Panc1 (cell line): ENCODE measurements at regions of chr16 and their contacts with region 1.

Region 1: DNA sequence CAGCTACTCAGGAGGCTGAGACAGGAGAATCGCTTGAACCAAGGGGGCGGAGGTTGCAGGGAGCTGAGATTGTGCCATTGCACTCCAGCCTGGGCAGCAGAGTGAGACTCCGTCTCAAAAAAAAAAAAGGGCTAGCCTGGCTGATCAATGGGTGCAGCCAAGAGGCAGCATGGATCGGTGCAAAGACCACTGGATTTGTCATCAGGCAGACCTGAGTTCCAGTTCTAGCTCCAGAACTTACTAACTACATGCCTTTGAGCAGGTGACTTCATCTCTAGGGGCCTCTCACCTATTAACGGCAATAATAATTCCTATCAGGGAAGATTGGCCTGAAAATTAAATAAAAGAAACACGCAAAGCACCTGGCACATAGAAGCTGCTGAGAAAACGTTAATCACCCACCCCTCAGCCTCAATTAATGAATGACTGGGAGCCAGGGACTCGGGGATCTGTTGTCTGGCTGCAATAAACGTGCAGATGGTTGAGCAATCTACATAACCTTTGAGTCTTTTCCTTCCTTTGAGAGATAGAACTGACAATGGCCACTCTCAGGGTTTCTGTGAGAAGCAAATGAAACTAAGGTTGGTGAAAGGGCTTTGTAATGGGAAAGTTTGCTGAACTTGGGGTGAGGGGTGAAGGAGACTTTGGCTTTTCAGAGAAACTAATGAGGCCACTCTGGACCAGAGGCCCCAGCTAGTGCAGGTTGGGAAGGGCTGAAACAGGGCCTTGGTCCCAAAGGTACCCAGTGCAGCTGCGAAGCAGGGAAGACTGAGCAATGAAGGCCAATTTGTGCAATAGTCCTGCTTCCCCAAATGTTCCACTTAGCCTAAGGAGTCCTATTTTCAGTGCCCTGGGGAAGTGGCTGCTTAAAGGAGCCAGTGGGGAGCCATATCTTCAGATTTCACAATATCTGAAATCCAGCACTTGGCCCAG is 7.6 kb downstream of the SEZ6L2 start:
- DNase-seq: no peak
- ATAC-seq: no peak
- H3K4me3 ChIP-seq: no peak overlapping the region
- H3K27ac ChIP-seq: no peak overlapping the region
- H3K4me1 ChIP-seq: no peaks in the 10 kb centered on the region
- H3K27me3 ChIP-seq: no peaks in the 10 kb centered on the region
- CTCF ChIP-seq: no peak

Region 2: GRCh38 chr16:29694384-29695195 is 197.2 kb before region 1 on chr16:
- CTCF ChIA-PET with region 1: interaction called, 11 read pairs
- POLR2A ChIA-PET with region 1: no interaction called
- in situ Hi-C with region 1: no loop called
- intact Hi-C with region 1: no loop called
- DNase-seq: no peak
- ATAC-seq: no peak
- H3K4me3 ChIP-seq: no peak overlapping the region
- H3K27ac ChIP-seq: no peak overlapping the region
- H3K4me1 ChIP-seq: no peaks in the 10 kb centered on the region
- H3K27me3 ChIP-seq: no peaks in the 10 kb centered on the region
- CTCF ChIP-seq: no peak